Right ventricle myocardium inferior (tissue), 1 donor: ENCODE measurements at regions of chr4 and their contacts with region 1.

Region 1: GRCh38 chr4:72006586-72006985 is 25.2 kb upstream of the NPFFR2 start:
- DNase-seq: no peak
- ATAC-seq: no peak

Region 2: DNA sequence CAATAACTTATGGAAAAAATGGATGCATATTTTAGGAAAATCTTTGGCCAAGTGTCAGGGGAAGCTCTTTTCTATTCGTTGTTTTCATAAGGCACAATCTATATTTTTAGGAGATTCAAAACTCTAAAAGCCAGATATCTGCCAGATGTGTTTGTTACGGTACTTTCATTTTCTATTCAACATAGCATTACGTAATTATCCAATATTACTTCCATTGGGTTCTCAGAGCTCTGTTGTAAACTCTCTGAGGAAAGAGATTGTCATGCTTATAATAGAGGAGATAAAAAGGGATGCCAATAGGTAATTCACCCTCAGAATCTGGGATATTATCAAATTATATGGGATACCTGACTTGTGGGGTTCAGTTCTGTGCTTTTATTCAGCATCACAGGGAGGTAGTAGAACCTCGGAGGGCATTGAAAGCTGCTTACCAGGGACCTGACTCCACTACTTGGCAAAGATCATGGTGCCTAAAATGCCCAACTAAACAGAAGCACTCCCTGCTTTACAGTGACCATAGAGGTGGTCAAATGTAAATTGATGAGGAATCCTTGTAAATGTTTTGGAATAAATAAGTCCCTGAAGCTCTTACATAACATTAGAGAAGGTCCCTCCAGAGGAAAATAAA is 189.8 kb before region 1 on chr4:
- intact Hi-C with region 1: no loop called
- DNase-seq: no peak
- ATAC-seq: no peak

Region 3: DNA sequence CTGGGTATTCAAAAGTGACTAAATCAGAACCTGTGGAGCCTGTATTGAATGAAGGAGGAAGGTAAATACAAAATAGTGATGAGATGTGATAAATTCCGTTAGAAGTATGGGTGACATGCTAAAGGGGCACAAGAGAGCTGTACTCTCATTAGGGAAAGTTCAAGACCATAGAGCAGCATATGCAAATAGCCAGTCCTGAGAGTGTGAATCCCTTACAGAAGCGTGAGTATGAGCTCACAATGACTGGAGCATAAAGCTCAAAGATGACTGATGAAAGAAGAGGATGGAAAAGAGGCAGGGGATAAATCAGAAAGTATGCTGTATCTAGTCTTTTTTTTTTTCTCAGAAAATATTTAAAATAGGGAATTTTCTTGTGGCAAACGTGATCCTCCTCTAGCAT is 13.1 kb after region 1 on chr4:
- intact Hi-C with region 1: loop called (anchors 1 kb)
- DNase-seq: no peak
- ATAC-seq: no peak

Region 4: GRCh38 chr4:72055566-72055965 is 49.0 kb after region 1 on chr4:
- intact Hi-C with region 1: no loop called
- DNase-seq: no peak
- ATAC-seq: no peak